ENCODE measurements at regions of chr12 and their contacts with region 1.

Region 1: GRCh38 chr12:96061864-96062453 is 26.6 kb upstream of the LTA4H start:
- DNase-seq: peak; percentile 81 to 83
- ATAC-seq: peak; percentile 90
- H3K4me3 ChIP-seq: no peak overlapping the region
- H3K27ac ChIP-seq: no peak overlapping the region
- H3K4me1 ChIP-seq: no peaks in the 10 kb centered on the region
- H3K27me3 ChIP-seq: no peaks in the 10 kb centered on the region

Region 2: GRCh38 chr12:95908573-95908972 is 153.4 kb before region 1 on chr12:
- intact Hi-C with region 1: no loop called
- DNase-seq: no peak
- ATAC-seq: no peak
- H3K4me3 ChIP-seq: no peak overlapping the region
- H3K27ac ChIP-seq: no peak overlapping the region
- H3K4me1 ChIP-seq: no peaks in the 10 kb centered on the region
- H3K27me3 ChIP-seq: no peaks in the 10 kb centered on the region

Region 3: GRCh38 chr12:96194971-96195844 is 133.2 kb after region 1 on chr12:
- intact Hi-C with region 1: loop called in 1 of 2 experiments (anchors 5 kb)
- DNase-seq: peak in 1 of 2 donors; percentile 80
- ATAC-seq: peak; percentile 61
- H3K4me3 ChIP-seq: peak overlapping the region; percentile 91 to 100
- H3K27ac ChIP-seq: peak overlapping the region; percentile 10 to 24
- H3K4me1 ChIP-seq: peaks cover 0 to 4% of the 10 kb centered on the region in 2 donors
- H3K27me3 ChIP-seq: no peaks in the 10 kb centered on the region

Region 4: DNA sequence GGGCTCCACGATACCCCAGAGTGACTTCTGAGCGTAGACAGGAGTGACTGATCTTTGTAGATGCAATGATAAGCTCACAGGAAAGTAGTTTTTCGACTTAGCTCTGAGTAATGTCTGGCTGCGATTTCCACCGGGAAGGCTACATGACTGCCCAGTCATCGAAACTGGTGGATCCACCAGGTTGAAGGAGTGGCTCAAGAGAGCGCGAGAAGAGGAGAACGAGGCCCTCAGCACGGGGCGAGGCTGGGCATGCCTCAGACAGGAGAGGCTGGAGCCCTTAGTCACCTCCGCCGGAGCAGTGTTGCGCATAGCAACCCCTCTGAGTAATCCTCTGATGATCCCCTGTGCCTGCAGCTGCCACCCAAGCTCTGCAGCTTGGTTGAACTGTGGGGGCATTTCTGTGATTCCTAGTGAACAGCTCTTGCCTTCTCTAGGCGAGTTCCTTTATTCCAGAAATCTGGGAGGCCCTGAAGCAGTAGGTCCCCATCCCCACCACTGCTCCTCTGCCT is 157.8 kb after region 1 on chr12:
- intact Hi-C with region 1: loop called (anchors 1 to 2 kb)
- DNase-seq: peak; percentile 59 to 75
- ATAC-seq: no peak
- H3K4me3 ChIP-seq: no peak overlapping the region
- H3K27ac ChIP-seq: no peak overlapping the region
- H3K4me1 ChIP-seq: no peaks in the 10 kb centered on the region
- H3K27me3 ChIP-seq: no peaks in the 10 kb centered on the region

Region 5: DNA sequence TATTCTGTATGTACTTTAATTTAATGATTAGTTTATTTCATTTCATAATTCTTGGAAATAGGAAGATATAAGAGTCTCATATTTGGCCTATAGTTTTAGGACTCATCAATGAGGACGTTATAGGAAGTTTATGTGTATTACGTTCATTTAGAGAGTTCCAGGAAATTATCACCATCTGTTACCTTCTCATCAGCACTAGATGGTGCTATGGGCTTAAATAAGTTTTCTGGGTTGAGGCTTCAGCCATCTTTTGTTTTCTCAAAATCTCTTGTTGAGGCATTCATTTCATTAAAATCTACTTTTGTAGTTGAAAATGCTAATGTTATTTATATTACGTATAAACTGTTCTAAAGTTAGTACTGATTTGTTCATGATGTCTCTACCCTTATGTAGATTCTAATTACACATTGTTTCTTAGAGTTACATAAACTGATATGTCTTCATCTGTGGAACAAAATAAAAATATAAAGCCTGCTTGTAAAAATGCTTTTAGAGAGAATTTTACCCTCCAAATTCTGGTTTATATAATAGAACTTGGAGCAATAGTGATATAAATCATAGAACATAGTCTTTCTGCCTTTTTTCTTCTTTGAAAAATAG is 516.7 kb after region 1 on chr12:
- intact Hi-C with region 1: no loop called
- DNase-seq: no peak
- ATAC-seq: no peak
- H3K4me3 ChIP-seq: no peak overlapping the region
- H3K27ac ChIP-seq: no peak overlapping the region
- H3K4me1 ChIP-seq: no peaks in the 10 kb centered on the region
- H3K27me3 ChIP-seq: no peaks in the 10 kb centered on the region